Posterior cingulate gyrus (tissue), 11 donors: ENCODE measurements at regions of chr7 and their contacts with region 1.

Region 1: GRCh38 chr7:74587435-74588126 is 69.9 kb upstream of the GTF2I start:
- DNase-seq: peak in 7 of 10 donors; percentile 32 to 91 (median 65)

Region 2: GRCh38 chr7:73758581-73759138 is 828.9 kb before region 1 on chr7:
- intact Hi-C with region 1: no loop called
- DNase-seq: peak in 2 of 10 donors; percentile 19 to 53

Region 3: DNA sequence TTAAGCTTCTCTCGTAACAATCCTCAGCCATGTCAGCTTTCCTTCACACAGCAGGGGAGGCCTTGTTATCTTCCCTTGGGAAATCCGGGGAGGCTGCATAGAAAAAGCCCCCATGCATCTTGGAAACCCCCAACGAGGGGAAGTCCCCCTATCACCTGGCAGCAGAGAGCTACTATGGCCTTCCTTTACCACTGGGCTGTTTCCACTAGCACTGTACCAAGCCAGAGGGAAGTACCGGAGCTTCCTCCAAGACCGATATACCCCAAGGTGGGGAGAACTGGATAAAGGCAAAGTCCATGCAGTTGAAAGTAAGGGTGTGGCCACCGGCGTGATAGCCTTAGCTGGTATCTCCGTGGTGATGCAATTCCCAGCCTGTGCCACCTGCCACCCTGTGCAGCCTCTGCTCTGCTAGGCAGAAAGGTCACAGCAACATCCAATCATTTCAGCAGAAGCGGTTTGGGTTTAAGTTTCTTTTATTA is 302.8 kb before region 1 on chr7:
- intact Hi-C with region 1: no loop called
- DNase-seq: no peak

Region 4: DNA sequence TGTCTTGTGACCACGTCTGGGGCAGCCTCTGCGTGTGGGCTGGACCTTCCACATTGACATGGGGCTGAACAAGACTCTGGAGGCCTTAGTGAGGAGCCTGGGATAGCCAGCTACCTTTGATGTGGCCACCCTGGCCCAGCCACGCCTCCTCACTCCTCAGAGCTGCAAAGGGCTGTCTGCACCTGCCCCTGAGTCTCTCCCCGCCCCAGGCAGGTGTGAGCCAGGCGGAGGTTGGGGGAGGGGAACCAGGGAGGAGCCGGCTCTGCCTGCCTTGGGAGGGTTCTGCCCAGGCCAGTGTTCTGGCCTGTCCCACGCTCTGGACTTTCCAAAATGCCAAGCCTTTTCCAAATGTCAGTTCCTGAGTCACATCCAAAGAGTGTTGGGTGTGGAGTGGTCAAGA is 61.7 kb before region 1 on chr7:
- intact Hi-C with region 1: loop called (anchors 5 kb)
- DNase-seq: no peak

Region 5: DNA sequence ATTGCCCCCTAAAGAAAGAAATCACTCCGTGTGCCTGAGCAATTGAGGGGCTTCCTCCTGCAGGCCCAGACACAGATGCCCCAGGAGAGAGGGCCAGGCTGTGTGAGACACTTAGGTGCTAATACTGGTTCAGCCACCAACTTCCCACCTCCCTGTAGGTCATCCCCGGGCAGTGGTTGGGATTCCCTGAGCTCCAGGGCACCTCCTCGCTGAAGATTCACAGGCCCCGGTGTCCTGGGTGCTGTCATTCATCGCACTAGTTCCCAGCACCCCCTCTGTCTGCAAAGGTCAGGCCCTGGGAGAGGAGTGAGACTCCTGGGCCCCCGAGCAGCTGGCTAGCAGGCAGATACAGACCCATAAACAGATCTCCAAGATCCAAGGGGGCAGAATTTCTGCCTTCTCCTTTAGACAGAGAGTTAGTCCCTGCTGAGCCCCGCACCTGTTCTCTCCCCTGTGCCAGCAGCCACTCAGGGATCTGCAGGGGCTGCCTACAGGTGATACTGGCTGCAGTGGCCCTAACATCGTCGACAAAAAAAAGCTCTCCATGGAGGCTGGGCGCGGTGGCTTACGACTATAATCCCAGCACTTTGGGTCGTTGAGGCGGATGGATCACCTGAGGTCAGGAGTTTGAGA is 31.8 kb after region 1 on chr7:
- intact Hi-C with region 1: no loop called
- DNase-seq: no peak

Region 6: GRCh38 chr7:74633451-74633921 is 45.9 kb after region 1 on chr7:
- intact Hi-C with region 1: loop called (anchors 10 kb)
- DNase-seq: no peak